ENCODE measurements at regions of chr12 and their contacts with region 1.

Region 1: GRCh38 chr12:15276088-15276698 is 46.1 kb upstream of the PTPRO start:
- DNase-seq: peak; percentile 43
- H3K4me3 ChIP-seq: no peak overlapping the region
- H3K27ac ChIP-seq: no peak overlapping the region
- H3K4me1 ChIP-seq: peaks cover 9% of the 10 kb centered on the region
- H3K27me3 ChIP-seq: no peaks in the 10 kb centered on the region
- CTCF ChIP-seq: peak; percentile 70 to 81 (median 74)
- POLR2A ChIP-seq: no peak

Region 2: DNA sequence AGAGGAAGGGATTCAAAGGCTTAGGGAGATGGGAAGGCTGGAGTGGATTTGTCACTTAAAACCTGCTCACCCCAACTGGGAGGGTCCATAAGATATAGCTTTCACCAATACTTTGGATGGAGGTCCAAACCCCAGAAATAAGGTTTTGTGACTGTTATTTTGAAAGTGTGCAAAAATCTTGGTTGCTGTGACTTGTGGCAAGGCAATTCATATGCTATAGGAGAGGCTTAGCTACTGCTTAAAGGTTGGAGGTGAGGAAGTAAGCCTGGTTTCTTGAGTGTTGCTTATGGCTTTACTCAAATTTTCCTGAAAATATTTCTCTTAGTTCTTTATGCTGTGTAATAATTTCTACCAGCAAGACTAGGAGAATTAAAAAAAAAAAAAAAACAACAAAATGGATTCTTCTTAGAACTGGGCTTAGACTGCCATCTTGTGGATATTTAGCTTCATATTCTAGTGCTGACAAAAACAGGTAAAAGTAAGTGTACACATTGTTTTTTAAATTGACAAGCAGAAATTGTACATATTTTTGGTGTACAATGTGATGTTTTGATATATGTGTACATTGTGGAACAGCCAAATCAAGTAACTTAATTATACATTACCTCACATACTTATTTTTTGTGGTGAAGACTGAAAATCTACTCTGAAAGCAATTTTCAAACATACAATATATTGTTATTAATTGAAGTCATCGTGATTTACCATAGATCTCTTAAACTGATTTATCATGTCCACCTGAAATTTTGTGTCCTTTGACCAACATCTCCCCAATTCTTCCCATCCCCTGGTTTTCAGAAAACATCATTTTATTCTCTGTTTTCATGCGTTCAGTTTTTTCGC is 280.4 kb before region 1 on chr12:
- intact Hi-C with region 1: loop called (anchors 10 kb)
- DNase-seq: no peak
- H3K4me3 ChIP-seq: no peak overlapping the region
- H3K27ac ChIP-seq: peak overlapping the region in 1 of 2 donors; percentile 2
- H3K4me1 ChIP-seq: no peaks in the 10 kb centered on the region
- H3K27me3 ChIP-seq: no peaks in the 10 kb centered on the region
- CTCF ChIP-seq: peak in 3 of 4 experiments; percentile 71 to 74 (median 72)
- POLR2A ChIP-seq: no peak

Region 3: GRCh38 chr12:15443611-15444010 is 167.4 kb after region 1 on chr12:
- intact Hi-C with region 1: no loop called
- DNase-seq: no peak
- H3K4me3 ChIP-seq: no peak overlapping the region
- H3K27ac ChIP-seq: no peak overlapping the region
- H3K4me1 ChIP-seq: no peaks in the 10 kb centered on the region
- H3K27me3 ChIP-seq: no peaks in the 10 kb centered on the region
- CTCF ChIP-seq: no peak
- POLR2A ChIP-seq: no peak

Region 4: GRCh38 chr12:15522565-15523187 is 246.5 kb after region 1 on chr12:
- intact Hi-C with region 1: loop called (anchors 5 kb)
- DNase-seq: peak; percentile 11
- H3K4me3 ChIP-seq: no peak overlapping the region
- H3K27ac ChIP-seq: no peak overlapping the region
- H3K4me1 ChIP-seq: no peaks in the 10 kb centered on the region
- H3K27me3 ChIP-seq: no peaks in the 10 kb centered on the region
- CTCF ChIP-seq: peak in 3 of 4 experiments; percentile 47 to 76 (median 73)
- POLR2A ChIP-seq: no peak

Region 5: GRCh38 chr12:15584366-15585041 is 308.3 kb after region 1 on chr12:
- intact Hi-C with region 1: loop called (anchors 10 kb)
- DNase-seq: peak; percentile 17
- H3K4me3 ChIP-seq: no peak overlapping the region
- H3K27ac ChIP-seq: no peak overlapping the region
- H3K4me1 ChIP-seq: no peaks in the 10 kb centered on the region
- H3K27me3 ChIP-seq: no peaks in the 10 kb centered on the region
- CTCF ChIP-seq: peak in 3 of 4 experiments; percentile 24 to 69 (median 51)
- POLR2A ChIP-seq: no peak

Region 6: GRCh38 chr12:15856097-15856982 is 580.1 kb after region 1 on chr12:
- intact Hi-C with region 1: loop called (anchors 5 kb)
- DNase-seq: peak; percentile 57
- H3K4me3 ChIP-seq: no peak overlapping the region
- H3K27ac ChIP-seq: no peak overlapping the region
- H3K4me1 ChIP-seq: no peaks in the 10 kb centered on the region
- H3K27me3 ChIP-seq: no peaks in the 10 kb centered on the region
- CTCF ChIP-seq: peak; percentile 62 to 95 (median 81)
- POLR2A ChIP-seq: no peak

Measured in prostate gland (tissue), 2 donors.